Heart left ventricle (tissue), 16 donors: ENCODE measurements at regions of chr5 and their contacts with region 1.

Region 1: DNA sequence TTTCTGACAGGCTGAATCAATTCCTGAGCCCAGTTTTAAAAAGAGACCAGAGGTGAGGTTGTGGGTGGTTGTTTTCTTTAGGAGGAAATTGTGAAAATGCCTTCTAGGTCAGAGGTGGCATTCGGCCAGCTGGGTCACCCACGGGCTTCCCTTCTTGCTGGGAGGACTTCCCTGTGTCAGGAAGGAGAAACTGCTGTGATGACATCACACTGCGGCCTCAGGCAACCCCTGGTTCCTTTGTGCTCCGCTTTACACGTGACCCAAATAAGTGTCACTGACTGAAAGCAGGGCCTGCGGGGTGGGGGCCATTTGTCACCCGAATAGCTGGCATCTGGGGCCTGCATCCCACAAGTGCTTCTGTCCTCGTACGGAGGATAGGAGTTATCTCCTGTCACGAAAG is 39.7 kb downstream of the FABP6 start:
- DNase-seq: peak; percentile 91 to 96 (median 93)
- ATAC-seq: peak; percentile 94 to 98 (median 95)
- H3K4me3 ChIP-seq: peak overlapping the region in 8 of 12 donors; percentile 1 to 21 (median 11)
- H3K27ac ChIP-seq: peak overlapping the region; percentile 25 to 89 (median 68)
- H3K4me1 ChIP-seq: peaks cover 0 to 41% (median 30%) of the 10 kb centered on the region in 12 donors
- H3K27me3 ChIP-seq: no peaks in the 10 kb centered on the region
- CTCF ChIP-seq: no peak
- POLR2A ChIP-seq: no peak

Region 2: DNA sequence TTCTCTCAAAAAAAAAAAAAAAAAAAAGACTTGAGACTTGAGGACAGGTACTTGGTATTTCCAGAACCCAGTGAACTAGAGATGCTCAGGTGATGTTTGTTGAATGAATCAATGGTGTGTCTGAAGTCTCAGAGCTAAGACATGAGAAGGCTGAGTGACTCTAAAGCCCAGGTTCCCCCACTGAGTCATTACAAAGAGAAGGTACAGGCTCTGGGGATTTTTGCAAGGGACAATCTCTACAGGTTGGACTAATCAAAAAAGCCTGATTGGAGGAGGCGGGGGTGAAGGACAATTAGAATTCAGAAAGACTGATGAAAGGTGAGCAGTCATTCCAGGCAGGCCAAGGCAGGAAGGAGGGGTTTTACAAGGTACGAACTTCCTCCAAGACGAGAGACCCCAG is 47.9 kb before region 1 on chr5:
- intact Hi-C with region 1: no loop called
- DNase-seq: no peak
- ATAC-seq: no peak
- H3K4me3 ChIP-seq: no peak overlapping the region
- H3K27ac ChIP-seq: no peak overlapping the region
- H3K4me1 ChIP-seq: no peaks in the 10 kb centered on the region
- H3K27me3 ChIP-seq: no peaks in the 10 kb centered on the region
- CTCF ChIP-seq: no peak
- POLR2A ChIP-seq: no peak

Region 3: DNA sequence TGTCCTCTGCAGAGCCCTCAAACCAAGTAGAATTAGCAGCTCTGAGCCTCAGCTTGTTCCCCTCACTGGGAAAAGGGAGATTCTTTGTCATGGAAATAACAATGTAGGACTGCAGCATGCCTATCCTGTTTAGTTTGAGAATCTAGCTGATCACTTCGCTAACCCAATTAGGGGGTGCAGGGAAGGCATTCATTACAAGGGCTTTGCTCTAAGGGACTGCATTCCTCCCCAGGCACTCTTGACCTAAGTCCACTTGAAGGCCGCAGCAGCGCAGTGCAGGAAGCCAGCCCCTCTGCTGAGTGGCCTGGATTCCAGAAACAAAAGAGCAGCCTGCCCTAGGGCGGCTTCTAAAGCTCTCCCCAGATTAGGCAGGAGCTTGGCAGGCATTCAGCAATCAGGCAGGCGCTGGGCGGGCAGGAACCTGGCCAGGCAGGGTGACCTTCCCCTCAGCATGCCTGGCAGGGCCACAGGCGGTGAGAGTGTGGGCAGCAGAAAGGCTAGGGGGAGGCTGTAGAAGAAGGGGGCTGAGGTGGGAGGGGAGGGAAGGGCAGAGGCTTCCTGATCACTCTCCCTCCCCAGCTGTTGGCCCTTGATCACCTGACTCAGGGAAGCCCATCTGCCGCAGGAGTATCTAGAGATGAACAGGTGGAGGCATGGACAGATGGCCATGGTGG is 18.5 kb after region 1 on chr5:
- intact Hi-C with region 1: loop called in 1 of 10 experiments (anchors 1 kb)
- DNase-seq: peak; percentile 85 to 93 (median 86)
- ATAC-seq: peak; percentile 93 to 97 (median 96)
- H3K4me3 ChIP-seq: no peak overlapping the region
- H3K27ac ChIP-seq: peak overlapping the region; percentile 53 to 90 (median 74)
- H3K4me1 ChIP-seq: peaks cover 3 to 43% (median 26%) of the 10 kb centered on the region in 12 donors
- H3K27me3 ChIP-seq: no peaks in the 10 kb centered on the region
- CTCF ChIP-seq: no peak
- POLR2A ChIP-seq: no peak

Region 4: GRCh38 chr5:160312134-160312959 is 43.3 kb after region 1 on chr5 and contains the start of gene CCNJL:
- intact Hi-C with region 1: loop called in 5 of 10 experiments (anchors 5 kb)
- DNase-seq: peak; percentile 66 to 82 (median 70)
- ATAC-seq: peak; percentile 28 to 83 (median 78)
- H3K4me3 ChIP-seq: peak within 1 kb of the TSS; percentile 59 to 97 (median 74)
- H3K27ac ChIP-seq: peak within 1 kb of the TSS in 11 of 12 donors; percentile 35 to 85 (median 80)
- H3K4me1 ChIP-seq: peaks cover 0 to 38% (median 9%) of the 10 kb centered on the region in 12 donors
- H3K27me3 ChIP-seq: peaks cover 0 to 49% (median 0%) of the 10 kb centered on the region in 9 donors
- CTCF ChIP-seq: no peak
- POLR2A ChIP-seq: peak in 1 of 2 donors; percentile 46
- total RNA-seq, gene CCNJL: 4.1 to 12.4 (median 7.6) TPM

Region 5: GRCh38 chr5:160382346-160382745 is 113.3 kb after region 1 on chr5:
- intact Hi-C with region 1: no loop called
- DNase-seq: no peak
- ATAC-seq: no peak
- H3K4me3 ChIP-seq: no peak overlapping the region
- H3K27ac ChIP-seq: no peak overlapping the region
- H3K4me1 ChIP-seq: peaks cover 0 to 12% (median 0%) of the 10 kb centered on the region in 12 donors
- H3K27me3 ChIP-seq: no peaks in the 10 kb centered on the region
- CTCF ChIP-seq: no peak
- POLR2A ChIP-seq: no peak

Region 6: GRCh38 chr5:160835376-160835775 is 566.4 kb after region 1 on chr5:
- intact Hi-C with region 1: no loop called
- DNase-seq: no peak
- ATAC-seq: no peak
- H3K4me3 ChIP-seq: no peak overlapping the region
- H3K27ac ChIP-seq: no peak overlapping the region
- H3K4me1 ChIP-seq: no peaks in the 10 kb centered on the region
- H3K27me3 ChIP-seq: no peaks in the 10 kb centered on the region
- CTCF ChIP-seq: no peak
- POLR2A ChIP-seq: no peak